Common myeloid progenitor, CD34-positive (primary cell): ENCODE measurements at regions of chr11 and their contacts with region 1.

Region 1: DNA sequence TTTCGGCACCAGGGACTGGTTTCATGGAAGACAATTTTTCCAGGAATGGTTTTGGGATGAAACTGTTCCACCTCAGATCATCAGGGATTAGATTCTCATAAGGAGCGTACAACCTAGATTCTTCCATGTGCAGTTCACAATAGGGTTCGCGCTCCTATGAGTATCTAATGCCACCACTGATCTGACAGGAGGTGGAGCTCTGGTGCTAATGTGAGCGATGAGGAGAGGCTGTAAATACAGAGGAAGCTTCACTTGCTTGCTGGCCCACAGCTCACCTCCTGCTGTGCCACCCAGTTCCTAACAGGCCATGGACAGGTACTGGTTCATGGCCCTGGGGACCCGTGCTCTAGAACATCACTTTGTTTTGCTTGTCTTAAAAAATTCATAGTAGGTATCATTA is 41.8 kb upstream of the AMPD3 start:
- DNase-seq: peak; percentile 60 to 74 (median 69)
- H3K4me3 ChIP-seq: no peak overlapping the region
- H3K27ac ChIP-seq: no peak overlapping the region
- H3K4me1 ChIP-seq: peaks cover 21 to 70% (median 56%) of the 10 kb centered on the region in 4 experiments
- H3K27me3 ChIP-seq: no peaks in the 10 kb centered on the region

Region 2: DNA sequence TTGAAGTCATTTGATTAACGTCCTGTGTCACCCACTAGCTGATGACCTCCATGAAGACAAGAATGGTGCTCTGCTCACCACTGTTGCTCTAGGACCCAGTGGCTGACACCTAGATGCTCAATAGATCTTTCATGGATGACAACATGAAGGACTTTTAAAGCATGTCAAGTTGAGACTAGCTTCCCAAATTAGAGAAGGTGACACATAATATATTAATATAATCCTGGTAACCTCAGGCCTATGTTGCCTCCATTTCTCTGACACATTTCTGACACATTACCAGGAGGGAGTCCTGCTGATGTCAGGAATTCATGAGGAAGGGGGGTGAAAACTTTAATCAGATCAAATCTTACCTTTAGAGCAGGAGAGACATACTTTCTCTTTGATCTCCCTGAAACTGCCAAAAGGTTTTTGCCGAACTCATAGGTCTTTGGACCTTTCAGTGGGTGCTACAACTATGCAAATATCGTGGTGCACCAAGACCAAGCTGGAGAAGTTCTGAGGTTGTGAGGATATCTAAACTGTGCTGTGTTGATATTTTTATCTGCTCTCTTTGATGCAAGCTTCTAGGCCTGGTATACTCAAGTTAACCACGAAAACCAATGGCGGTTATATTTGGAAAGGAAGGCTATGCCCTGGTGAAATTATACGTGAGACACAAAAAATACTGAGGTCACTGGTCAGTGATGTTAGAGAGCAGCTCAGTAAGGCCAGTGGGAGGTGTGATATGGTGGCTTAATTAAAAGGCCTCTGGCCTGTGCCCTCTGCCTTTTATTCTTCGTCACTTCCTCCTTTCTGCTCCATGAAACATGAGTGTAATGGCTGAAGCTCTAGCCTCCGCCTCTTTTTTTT is 28.6 kb after region 1 on chr11:
- CTCF ChIA-PET with region 1: interaction called, 16 read pairs
- POLR2A ChIA-PET with region 1: interaction called, 6 read pairs
- DNase-seq: peak in 2 of 3 donors; percentile 52 to 53
- H3K4me3 ChIP-seq: no peak overlapping the region
- H3K27ac ChIP-seq: peak overlapping the region in 1 of 2 experiments; percentile 47
- H3K4me1 ChIP-seq: peaks cover 9 to 55% (median 22%) of the 10 kb centered on the region in 4 experiments
- H3K27me3 ChIP-seq: no peaks in the 10 kb centered on the region

Region 3: GRCh38 chr11:10476927-10477689 is 63.8 kb after region 1 on chr11:
- CTCF ChIA-PET with region 1: interaction called, 11 read pairs
- POLR2A ChIA-PET with region 1: no interaction called
- DNase-seq: peak in 2 of 3 donors; percentile 24 to 40
- H3K4me3 ChIP-seq: no peak overlapping the region
- H3K27ac ChIP-seq: no peak overlapping the region
- H3K4me1 ChIP-seq: peaks cover 0 to 6% (median 5%) of the 10 kb centered on the region in 4 experiments
- H3K27me3 ChIP-seq: no peaks in the 10 kb centered on the region

Region 4: DNA sequence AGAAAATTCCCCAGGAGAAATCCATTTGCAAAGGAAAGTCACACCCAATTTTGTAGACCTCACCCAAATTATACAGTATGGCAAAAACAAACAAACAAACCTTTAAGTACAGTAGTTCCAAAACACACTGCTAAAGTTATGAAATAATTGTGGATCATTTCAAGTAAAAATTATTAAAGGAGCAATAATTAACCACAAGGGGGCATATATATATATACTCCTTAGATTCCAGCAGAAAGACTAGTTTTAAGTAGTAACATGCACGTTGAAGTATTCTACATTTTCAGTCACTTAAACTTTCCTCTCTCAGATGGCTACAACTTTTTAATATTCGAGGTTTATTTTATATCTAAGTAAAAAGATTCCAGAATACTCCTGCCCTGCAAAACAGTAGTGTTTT is 100.9 kb after region 1 on chr11:
- CTCF ChIA-PET with region 1: interaction called, 13 read pairs
- POLR2A ChIA-PET with region 1: no interaction called
- DNase-seq: peak in 2 of 3 donors; percentile 51 to 53
- H3K4me3 ChIP-seq: no peak overlapping the region
- H3K27ac ChIP-seq: no peak overlapping the region
- H3K4me1 ChIP-seq: no peaks in the 10 kb centered on the region
- H3K27me3 ChIP-seq: no peaks in the 10 kb centered on the region

Region 5: DNA sequence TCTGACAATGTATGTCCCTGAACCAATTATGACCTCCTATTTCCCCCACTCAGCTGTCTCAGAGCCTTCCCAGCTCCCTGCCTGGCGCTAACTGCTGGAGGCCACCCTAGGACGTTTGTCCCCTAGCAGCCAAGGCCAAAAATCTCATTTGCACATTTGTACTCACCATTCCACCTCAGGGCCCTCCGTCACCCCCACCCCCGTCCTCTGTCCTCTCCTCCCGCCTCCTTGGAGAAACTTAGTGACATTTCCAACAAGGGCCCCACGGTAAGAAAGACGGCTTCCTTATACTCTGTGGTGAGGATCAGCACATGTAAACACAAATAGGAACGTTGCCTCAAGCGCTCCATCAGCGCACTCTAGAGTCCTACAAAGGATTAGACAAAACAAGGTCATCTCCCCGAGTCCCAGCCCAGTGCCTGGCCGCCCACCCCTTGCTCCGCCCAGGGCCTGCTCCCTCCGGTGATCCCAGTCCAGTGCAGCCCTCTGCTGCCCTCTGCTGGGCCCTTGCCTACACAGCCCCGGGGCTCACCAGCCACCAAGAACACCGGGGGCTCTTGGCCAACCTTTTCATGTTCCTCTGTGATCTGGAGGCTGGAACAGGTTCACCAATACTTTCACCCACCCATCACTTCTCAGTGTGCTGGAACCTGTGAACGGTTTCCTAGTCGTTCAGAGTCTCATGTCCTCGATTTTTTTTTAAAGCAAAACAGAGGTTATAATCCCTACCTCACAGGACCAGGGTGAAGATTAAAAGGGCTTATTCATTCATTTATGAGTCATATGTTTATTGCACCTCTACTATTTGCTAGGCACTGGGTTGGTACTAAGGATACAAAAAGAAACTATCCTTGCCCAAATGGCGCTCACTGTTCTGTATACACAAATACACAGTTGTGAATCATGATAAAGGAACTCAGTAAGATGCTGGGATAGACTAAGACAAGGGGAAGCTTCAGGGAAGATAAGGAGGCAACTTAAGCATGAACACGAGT is 322.5 kb after region 1 on chr11:
- CTCF ChIA-PET with region 1: interaction called, 55 read pairs
- POLR2A ChIA-PET with region 1: no interaction called
- DNase-seq: peak; percentile 94 to 96 (median 96)
- H3K4me3 ChIP-seq: peak overlapping the region in 5 of 7 experiments; percentile 19 to 58 (median 25)
- H3K27ac ChIP-seq: peak overlapping the region in 1 of 2 experiments; percentile 34
- H3K4me1 ChIP-seq: peaks cover 2 to 32% (median 11%) of the 10 kb centered on the region in 4 experiments
- H3K27me3 ChIP-seq: no peaks in the 10 kb centered on the region